HCT116 (cell line): ENCODE measurements at regions of chr6 and their contacts with region 1.

Region 1: DNA sequence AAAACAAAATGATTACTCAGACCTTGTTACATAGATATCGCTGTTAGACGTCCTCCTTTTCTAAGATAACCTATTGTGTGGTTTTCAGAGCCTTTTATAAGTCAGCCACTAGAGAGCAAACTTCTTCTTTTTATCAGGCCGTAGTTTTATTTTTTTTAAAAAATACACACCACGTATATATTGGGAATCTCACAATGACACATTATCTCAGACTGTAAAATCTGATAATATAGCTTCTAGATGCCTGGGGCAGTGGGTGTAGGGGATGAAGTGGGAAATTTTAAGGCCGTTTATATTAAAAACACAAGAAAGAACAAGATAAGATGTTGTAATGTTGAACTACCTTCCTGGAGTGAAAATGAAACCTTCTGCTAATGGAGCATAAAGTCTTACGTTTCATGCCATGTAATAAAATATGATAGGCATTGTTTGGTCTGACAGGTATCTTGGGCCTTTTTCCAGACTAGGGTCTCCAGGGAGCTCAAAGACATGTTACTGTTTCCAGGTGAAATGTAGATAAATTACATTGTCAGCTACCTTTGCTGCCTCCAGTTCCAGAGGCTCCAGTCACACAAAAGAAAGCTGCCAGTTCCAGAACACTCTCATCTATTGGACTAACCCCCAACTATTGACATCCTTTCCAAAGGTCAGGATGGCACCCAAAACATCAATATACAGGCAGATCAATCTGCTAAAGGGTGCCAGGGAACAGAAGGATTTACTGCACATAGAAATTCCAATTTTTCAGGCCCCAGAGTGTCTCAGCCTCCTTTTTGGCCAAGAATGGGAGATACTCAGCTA is 130.2 kb upstream of the AKIRIN2 start:
- DNase-seq: no peak
- ATAC-seq: peak; percentile 85
- H3K4me3 ChIP-seq: peak overlapping the region; percentile 8 to 47
- H3K27ac ChIP-seq: no peak overlapping the region
- H3K4me1 ChIP-seq: no peaks in the 10 kb centered on the region
- H3K27me3 ChIP-seq: no peaks in the 10 kb centered on the region
- CTCF ChIP-seq: peak; percentile 19 to 54 (median 30); a peak in 3 of 6 replicates
- POLR2A ChIP-seq: no peak
- RAD21 ChIP-seq: peak; percentile 55

Region 2: GRCh38 chr6:88238065-88238464 is 405.8 kb after region 1 on chr6:
- CTCF ChIA-PET with region 1: no interaction called
- POLR2A ChIA-PET with region 1: no interaction called
- RAD21 ChIA-PET with region 1: no interaction called
- intact Hi-C with region 1: loop called (anchors 10 kb)
- DNase-seq: peak; percentile 13
- ATAC-seq: peak; percentile 67
- H3K4me3 ChIP-seq: no peak overlapping the region
- H3K27ac ChIP-seq: no peak overlapping the region
- H3K4me1 ChIP-seq: no peaks in the 10 kb centered on the region
- H3K27me3 ChIP-seq: no peaks in the 10 kb centered on the region
- CTCF ChIP-seq: peak; percentile 28 to 44 (median 40); a peak in 5 of 6 replicates
- POLR2A ChIP-seq: no peak
- RAD21 ChIP-seq: peak; percentile 62